ENCODE measurements at regions of chr13 and their contacts with region 1.

Region 1: DNA sequence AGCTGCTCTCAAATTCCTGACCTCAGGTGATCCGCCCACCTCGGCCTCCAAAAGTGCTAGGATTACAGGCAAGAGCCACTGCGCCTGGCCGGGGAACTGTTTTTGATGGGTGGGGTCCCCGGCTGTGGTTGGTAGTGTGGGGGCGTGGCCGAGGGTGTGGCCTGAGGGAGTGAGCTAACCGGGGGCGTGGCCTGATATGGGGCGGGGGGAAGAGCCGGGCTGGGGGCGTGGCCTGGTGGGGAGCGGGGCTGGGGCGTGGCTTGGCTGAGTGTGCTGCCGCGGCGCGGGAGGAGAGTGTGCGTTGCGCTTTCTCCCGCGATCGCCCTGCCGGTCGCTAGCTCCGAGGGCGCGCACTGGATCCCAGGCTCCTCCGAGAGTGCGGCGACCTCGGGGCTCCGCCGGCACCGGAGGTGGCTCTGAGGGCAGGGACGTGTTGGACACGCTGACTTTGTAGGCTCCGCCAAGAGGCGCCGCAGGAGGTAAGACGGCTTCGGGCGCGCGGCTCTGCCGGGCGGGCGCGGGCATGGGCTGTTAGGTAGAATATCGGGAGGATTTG is at the start of gene SPATA13:
- DNase-seq: peak; percentile 92
- ATAC-seq: peak; percentile 95
- H3K4me3 ChIP-seq: peak within 1 kb of the TSS; percentile 6 to 80 (median 74)
- H3K4me3 Mint-ChIP-seq: peak within 1 kb of the TSS; percentile 87
- H3K27ac ChIP-seq: no peak within 1 kb of the TSS
- H3K27ac Mint-ChIP-seq: peak within 1 kb of the TSS; percentile 37
- H3K4me1 ChIP-seq: peaks cover 9 to 20% of the 10 kb centered on the region in 2 donors
- H3K4me1 Mint-ChIP-seq: peaks cover 18% of the 10 kb centered on the region
- H3K27me3 ChIP-seq: peaks cover 0 to 32% (median 11%) of the 10 kb centered on the region in 4 experiments
- H3K27me3 Mint-ChIP-seq: peaks cover 22% of the 10 kb centered on the region
- CTCF ChIP-seq: no peak
- total RNA-seq, gene SPATA13: 8.3 and 8.8 TPM in 2 replicates

Region 2: DNA sequence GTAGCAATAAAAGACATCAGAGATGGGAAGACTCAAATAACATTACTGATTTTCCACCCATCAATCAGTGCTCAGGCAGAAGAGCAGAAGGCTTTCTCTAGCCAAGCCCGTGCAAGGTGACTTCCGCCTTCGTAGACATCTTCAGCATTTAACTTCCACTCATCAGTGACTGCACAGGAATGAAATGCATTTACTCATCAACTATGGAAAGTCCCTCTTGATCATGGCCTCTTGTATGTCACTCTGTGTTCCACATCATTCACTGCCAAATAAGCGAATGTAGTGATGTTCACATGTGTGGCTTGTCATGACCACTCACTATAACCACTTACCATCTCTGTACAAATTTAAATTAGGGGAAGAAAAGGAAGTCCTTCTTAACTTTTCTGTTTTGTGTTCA is 776.4 kb before region 1 on chr13:
- CTCF ChIA-PET with region 1: no interaction called
- POLR2A ChIA-PET with region 1: no interaction called
- intact Hi-C with region 1: loop called (anchors 1 kb)
- DNase-seq: peak; percentile 92
- ATAC-seq: peak; percentile 98
- H3K4me3 ChIP-seq: no peak overlapping the region
- H3K4me3 Mint-ChIP-seq: peak overlapping the region; percentile 40
- H3K27ac ChIP-seq: peak overlapping the region; percentile 37 to 68
- H3K27ac Mint-ChIP-seq: peak overlapping the region; percentile 76
- H3K4me1 ChIP-seq: peaks cover 30% of the 10 kb centered on the region in 2 donors
- H3K4me1 Mint-ChIP-seq: peaks cover 31% of the 10 kb centered on the region
- H3K27me3 ChIP-seq: peaks cover 0 to 4% (median 0%) of the 10 kb centered on the region in 4 experiments
- H3K27me3 Mint-ChIP-seq: peaks cover 4% of the 10 kb centered on the region
- CTCF ChIP-seq: no peak

Region 3: DNA sequence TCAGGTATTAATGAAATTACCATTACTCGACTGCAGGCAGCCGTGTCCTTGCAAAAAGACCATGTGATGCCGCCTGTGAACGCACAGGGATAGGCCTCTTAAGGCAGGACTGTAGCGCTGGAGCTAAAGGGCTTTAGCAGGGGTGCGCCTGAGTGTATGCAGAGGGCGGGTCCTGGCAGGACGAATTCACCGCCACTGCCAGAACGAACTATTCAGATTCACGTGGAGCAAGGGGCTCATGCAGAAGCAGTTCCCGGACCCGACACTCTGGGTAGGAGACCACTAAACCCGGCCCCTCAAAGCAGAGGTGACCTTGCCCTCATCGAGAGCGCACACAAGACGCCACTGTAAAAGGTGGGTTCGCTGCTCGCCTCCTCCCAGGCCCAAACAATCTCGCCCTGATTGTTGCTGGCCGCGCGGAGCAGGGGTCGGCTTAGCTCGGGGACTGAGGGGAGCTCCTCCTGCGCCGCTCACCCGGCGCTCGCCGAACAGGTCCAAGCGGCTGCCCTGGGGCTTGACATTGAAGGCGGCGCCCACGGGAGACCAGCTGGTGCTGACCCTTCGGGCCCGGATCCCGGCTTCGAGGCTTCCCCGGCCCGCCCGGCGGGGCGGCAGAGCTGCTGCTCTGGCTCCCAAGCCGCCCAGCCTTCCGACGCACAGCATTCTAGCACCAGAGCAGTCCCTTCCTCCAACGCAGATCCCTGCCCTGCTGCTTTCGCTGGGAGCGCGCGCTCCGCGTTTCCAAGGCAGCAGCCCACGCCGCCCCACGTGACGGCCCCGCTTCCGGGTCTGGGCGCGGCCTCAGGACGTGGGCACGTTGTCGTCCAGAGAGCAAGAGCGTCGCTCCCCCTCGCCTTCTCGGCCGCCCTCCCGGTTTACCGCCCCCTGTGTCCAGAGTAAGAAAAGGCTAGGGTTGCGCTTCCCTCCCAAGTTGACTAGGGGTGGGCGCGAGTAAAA is 271.6 kb before region 1 on chr13 and contains the start of gene MIPEP:
- CTCF ChIA-PET with region 1: no interaction called
- POLR2A ChIA-PET with region 1: no interaction called
- intact Hi-C with region 1: loop called (anchors 1 kb)
- DNase-seq: peak; percentile 92
- ATAC-seq: peak; percentile 93
- H3K4me3 ChIP-seq: peak within 1 kb of the TSS; percentile 24 to 96 (median 80)
- H3K4me3 Mint-ChIP-seq: peak within 1 kb of the TSS; percentile 94
- H3K27ac ChIP-seq: peak within 1 kb of the TSS; percentile 42 to 86
- H3K27ac Mint-ChIP-seq: peak within 1 kb of the TSS; percentile 95
- H3K4me1 ChIP-seq: peaks cover 12 to 17% of the 10 kb centered on the region in 2 donors
- H3K4me1 Mint-ChIP-seq: peaks cover 23% of the 10 kb centered on the region
- H3K27me3 ChIP-seq: no peaks in the 10 kb centered on the region
- H3K27me3 Mint-ChIP-seq: no peaks in the 10 kb centered on the region
- CTCF ChIP-seq: peak; percentile 69
- total RNA-seq, gene MIPEP: 15.7 and 16.9 TPM in 2 replicates

Region 4: DNA sequence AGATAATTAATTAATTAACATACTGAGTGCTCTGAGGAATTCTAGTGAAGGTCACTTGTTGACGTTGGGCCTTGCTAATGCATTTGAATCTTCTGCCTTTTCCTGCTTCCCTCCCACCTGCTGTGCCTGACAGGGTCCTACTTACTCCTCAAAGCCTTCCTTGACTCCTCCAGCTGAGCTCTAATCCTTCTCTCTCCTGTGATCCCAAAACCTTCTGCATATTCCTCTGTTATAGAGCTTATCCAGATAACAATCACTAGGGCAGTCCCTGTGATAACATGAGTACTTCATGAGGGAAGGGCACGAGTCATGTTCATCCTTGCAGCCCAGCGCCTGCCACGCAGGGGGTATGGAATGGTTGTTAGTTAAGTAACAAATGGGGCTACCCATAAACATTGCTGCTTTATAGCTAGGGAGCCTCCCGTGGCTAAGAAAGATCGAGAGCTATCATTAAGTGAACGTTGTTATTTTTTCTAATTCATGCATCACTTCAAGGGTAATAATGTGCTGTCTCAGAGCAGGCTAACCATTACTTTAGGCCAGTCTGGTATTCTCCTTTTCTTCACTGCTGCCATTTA is 19.1 kb before region 1 on chr13:
- CTCF ChIA-PET with region 1: no interaction called
- POLR2A ChIA-PET with region 1: no interaction called
- intact Hi-C with region 1: no loop called
- DNase-seq: no peak
- ATAC-seq: no peak
- H3K4me3 ChIP-seq: no peak overlapping the region
- H3K4me3 Mint-ChIP-seq: no peak overlapping the region
- H3K27ac ChIP-seq: no peak overlapping the region
- H3K27ac Mint-ChIP-seq: no peak overlapping the region
- H3K4me1 ChIP-seq: no peaks in the 10 kb centered on the region
- H3K4me1 Mint-ChIP-seq: no peaks in the 10 kb centered on the region
- H3K27me3 ChIP-seq: peaks cover 0 to 4% (median 0%) of the 10 kb centered on the region in 4 experiments
- H3K27me3 Mint-ChIP-seq: peaks cover 4% of the 10 kb centered on the region
- CTCF ChIP-seq: no peak

Measured in B cell (primary cell).